Heart right ventricle (tissue), 16 donors: ENCODE measurements at regions of chr5 and their contacts with region 1.

Region 1: DNA sequence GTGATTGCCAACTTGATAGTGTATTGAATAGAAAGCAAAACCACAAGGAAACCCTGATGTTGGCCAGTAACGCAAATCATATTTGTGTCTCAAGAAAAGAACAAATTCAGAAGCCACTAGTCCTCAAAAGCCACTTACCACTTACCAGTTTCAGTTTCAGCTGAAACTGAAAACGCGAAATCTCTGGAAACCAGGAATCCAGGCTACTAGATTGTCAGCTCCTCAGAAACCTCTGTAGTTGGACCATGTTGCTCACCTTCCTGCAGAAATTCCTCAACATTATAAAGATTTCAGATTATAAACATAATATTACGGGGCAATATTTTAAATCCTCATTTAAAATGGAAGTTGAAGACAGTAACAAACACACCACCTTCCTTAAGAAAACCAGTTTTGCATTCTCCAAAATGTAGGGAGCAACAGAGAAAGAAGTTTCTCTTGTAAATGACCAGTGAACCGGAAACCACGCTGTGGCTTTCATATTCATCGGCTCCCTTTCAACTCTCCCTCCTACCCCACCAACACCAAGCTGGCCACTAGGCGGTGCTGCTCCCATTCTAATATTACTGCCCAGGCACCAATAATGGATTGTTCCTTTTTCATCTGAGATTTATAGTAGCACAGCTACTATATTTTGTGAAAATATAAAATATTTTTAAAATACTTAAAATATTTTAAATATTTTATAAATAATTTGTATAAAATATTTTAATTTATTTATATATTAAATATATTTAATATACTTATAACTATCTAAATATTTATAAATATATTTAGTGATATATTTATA is 8.7 kb upstream of the TMED7 start:
- DNase-seq: peak; percentile 86 to 88
- ATAC-seq: peak; percentile 80 to 99 (median 97)
- H3K4me3 ChIP-seq: peak overlapping the region in 8 of 10 donors; percentile 18 to 56 (median 41)
- H3K27ac ChIP-seq: peak overlapping the region; percentile 20 to 74 (median 55)
- H3K4me1 ChIP-seq: peaks cover 0 to 10% (median 6%) of the 10 kb centered on the region in 9 donors
- H3K27me3 ChIP-seq: no peaks in the 10 kb centered on the region
- CTCF ChIP-seq: peak; percentile 71 to 94 (median 91)

Region 2: DNA sequence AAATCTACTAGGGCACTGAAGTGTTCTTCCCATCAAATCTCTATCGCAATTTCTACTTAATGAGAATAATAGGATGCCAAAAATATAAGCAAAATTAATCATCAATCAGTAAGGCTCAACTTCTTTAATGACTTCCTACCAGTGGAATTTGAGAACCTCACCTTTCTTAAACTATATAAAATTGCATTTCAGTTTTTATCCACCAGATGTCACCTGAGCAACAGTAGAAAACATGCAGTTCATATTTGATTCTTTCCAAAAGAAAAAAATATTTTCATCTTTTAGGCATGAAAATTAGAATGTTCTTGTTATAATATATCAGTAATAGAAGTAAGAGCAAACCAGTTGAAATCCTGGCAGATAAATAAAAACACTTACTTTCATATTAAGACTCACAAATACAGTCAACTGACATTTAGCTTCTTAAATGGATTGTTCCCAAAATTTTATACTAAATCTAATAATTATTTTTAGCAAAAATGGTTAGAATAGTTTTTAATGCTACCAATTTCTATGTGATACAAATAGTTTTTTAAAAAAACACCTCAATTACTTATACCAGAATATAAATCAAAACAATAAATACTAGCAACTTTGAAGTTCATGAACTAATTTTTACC is 324.7 kb before region 1 on chr5:
- intact Hi-C with region 1: no loop called
- DNase-seq: no peak
- ATAC-seq: peak in 2 of 8 donors; percentile 51 to 55
- H3K4me3 ChIP-seq: no peak overlapping the region
- H3K27ac ChIP-seq: no peak overlapping the region
- H3K4me1 ChIP-seq: no peaks in the 10 kb centered on the region
- H3K27me3 ChIP-seq: peaks cover 0 to 12% (median 0%) of the 10 kb centered on the region in 7 donors
- CTCF ChIP-seq: peak; percentile 55 to 87 (median 77)

Region 3: DNA sequence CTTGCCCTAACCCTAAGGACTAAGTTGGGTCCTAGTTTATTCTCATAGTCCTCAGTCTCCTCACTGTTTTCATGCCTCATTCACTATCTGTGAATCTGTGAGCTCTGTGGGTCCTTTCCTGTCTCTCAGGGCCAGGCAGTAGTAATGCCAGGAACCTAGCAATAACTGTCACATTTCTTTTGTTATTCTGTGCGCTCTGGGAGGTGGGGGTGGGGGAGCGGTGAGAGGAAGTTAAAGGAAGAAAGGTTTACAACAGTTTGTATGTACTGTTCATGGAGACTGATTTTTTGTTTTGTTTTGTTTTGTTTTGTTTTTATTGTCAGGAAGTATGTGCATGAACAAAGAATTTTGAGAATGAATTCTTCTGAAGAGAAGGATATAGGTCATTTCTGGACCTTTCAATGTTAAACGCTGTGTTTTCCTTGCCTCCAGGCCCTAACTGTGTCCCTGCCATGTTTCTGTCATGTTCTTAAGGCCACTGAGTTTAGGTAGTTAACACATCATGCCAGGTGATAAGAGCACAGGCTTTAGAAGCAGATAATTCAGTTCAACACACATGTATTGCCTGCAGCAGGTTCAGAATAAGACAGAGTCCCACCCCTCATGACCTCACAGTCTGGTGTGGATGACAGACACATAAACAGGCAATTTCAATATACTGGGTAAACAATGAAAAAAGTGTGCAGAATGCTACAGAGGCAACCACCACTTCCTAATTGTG is 76.7 kb before region 1 on chr5:
- intact Hi-C with region 1: no loop called
- DNase-seq: no peak
- ATAC-seq: peak in 6 of 8 donors; percentile 21 to 62 (median 50)
- H3K4me3 ChIP-seq: no peak overlapping the region
- H3K27ac ChIP-seq: peak overlapping the region in 7 of 10 donors; percentile 3 to 43 (median 30)
- H3K4me1 ChIP-seq: peaks cover 0 to 21% (median 13%) of the 10 kb centered on the region in 9 donors
- H3K27me3 ChIP-seq: no peaks in the 10 kb centered on the region
- CTCF ChIP-seq: no peak

Region 4: GRCh38 chr5:115831163-115831768 is 196.7 kb after region 1 on chr5:
- intact Hi-C with region 1: loop called in 5 of 10 experiments (anchors 2 to 5 kb)
- DNase-seq: peak in 1 of 2 donors; percentile 17
- ATAC-seq: peak in 2 of 8 donors; percentile 42 to 49
- H3K4me3 ChIP-seq: no peak overlapping the region
- H3K27ac ChIP-seq: no peak overlapping the region
- H3K4me1 ChIP-seq: peaks cover 0 to 5% (median 0%) of the 10 kb centered on the region in 9 donors
- H3K27me3 ChIP-seq: no peaks in the 10 kb centered on the region
- CTCF ChIP-seq: peak; percentile 52 to 85 (median 78)

Region 5: GRCh38 chr5:116076496-116076895 is 442.0 kb after region 1 on chr5:
- intact Hi-C with region 1: loop called in 1 of 10 experiments (anchors 5 kb)
- DNase-seq: no peak
- ATAC-seq: peak in 2 of 8 donors; percentile 31 to 71
- H3K4me3 ChIP-seq: no peak overlapping the region
- H3K27ac ChIP-seq: no peak overlapping the region
- H3K4me1 ChIP-seq: peaks cover 0 to 6% (median 0%) of the 10 kb centered on the region in 9 donors
- H3K27me3 ChIP-seq: no peaks in the 10 kb centered on the region
- CTCF ChIP-seq: no peak